ENCODE measurements at regions of chr22 and their contacts with region 1.

Region 1: GRCh38 chr22:27804470-27805297 is 3.1 kb upstream of the MN1 start:
- DNase-seq: peak; percentile 67 to 82 (median 79)
- H3K4me3 ChIP-seq: no peak overlapping the region
- H3K27ac ChIP-seq: peak overlapping the region in 1 of 2 donors; percentile 4
- H3K4me1 ChIP-seq: peaks cover 8% of the 10 kb centered on the region
- H3K27me3 ChIP-seq: no peaks in the 10 kb centered on the region
- CTCF ChIP-seq: peak; percentile 62 to 82 (median 76)
- EP300 ChIP-seq: no peak
- POLR2A ChIP-seq: no peak

Region 2: DNA sequence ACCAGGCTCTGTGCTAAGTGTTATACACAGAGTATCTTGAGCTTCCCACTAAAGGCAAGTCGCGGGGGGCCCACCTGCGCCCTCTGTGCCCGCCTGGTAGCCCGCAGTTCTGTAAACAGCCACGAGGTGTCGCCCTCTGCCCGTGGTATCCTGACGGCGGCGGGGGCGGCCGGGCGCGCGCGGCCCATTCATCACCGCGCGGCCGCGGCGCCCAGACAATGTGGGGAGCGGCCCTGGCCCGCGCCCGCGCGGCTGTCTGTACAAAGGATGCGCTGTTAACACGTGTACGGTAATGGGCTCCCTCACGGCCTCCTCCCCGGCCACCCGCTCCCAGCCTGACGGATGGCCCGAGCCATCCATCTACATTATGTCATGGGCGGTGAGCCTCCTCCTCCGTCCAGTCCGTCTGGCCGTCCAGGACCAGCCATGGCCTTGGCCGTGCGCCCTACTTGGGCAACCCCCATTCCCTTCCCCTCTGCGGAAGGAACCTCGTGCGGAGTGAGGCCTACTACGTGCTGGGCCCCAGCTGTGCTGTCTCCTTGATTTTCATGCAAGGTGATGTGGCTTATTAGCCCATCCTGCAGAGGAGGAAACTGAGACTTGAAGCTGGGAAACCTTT is 1047.9 kb before region 1 on chr22:
- intact Hi-C with region 1: loop called (anchors 2 to 5 kb)
- DNase-seq: peak; percentile 53 to 86 (median 79)
- H3K4me3 ChIP-seq: no peak overlapping the region
- H3K27ac ChIP-seq: no peak overlapping the region
- H3K4me1 ChIP-seq: peaks cover 1% of the 10 kb centered on the region
- H3K27me3 ChIP-seq: no peaks in the 10 kb centered on the region
- CTCF ChIP-seq: peak; percentile 85 to 95 (median 95)
- EP300 ChIP-seq: no peak
- POLR2A ChIP-seq: no peak

Region 3: GRCh38 chr22:27405672-27406388 is 398.9 kb before region 1 on chr22:
- intact Hi-C with region 1: loop called in 2 of 4 experiments (anchors 10 kb)
- DNase-seq: peak in 4 of 5 donors; percentile 39 to 63 (median 50)
- H3K4me3 ChIP-seq: no peak overlapping the region
- H3K27ac ChIP-seq: no peak overlapping the region
- H3K4me1 ChIP-seq: no peaks in the 10 kb centered on the region
- H3K27me3 ChIP-seq: no peaks in the 10 kb centered on the region
- CTCF ChIP-seq: peak in 2 of 3 donors; percentile 18 to 49
- EP300 ChIP-seq: no peak
- POLR2A ChIP-seq: no peak

Region 4: GRCh38 chr22:27670701-27671412 is 133.8 kb before region 1 on chr22:
- intact Hi-C with region 1: loop called in 1 of 4 experiments (anchors 10 kb)
- DNase-seq: no peak
- H3K4me3 ChIP-seq: no peak overlapping the region
- H3K27ac ChIP-seq: no peak overlapping the region
- H3K4me1 ChIP-seq: peaks cover 7% of the 10 kb centered on the region
- H3K27me3 ChIP-seq: no peaks in the 10 kb centered on the region
- CTCF ChIP-seq: no peak
- EP300 ChIP-seq: no peak
- POLR2A ChIP-seq: no peak

Region 5: GRCh38 chr22:28009272-28009827 is 204.7 kb after region 1 on chr22:
- intact Hi-C with region 1: loop called in 1 of 4 experiments (anchors 10 kb)
- DNase-seq: peak; percentile 74 to 86 (median 85)
- H3K4me3 ChIP-seq: no peak overlapping the region
- H3K27ac ChIP-seq: no peak overlapping the region
- H3K4me1 ChIP-seq: no peaks in the 10 kb centered on the region
- H3K27me3 ChIP-seq: no peaks in the 10 kb centered on the region
- CTCF ChIP-seq: peak; percentile 84 to 95 (median 93)
- EP300 ChIP-seq: no peak
- POLR2A ChIP-seq: no peak